HepG2 (cell line): ENCODE measurements at regions of chr6 and their contacts with region 1.

Region 1: DNA sequence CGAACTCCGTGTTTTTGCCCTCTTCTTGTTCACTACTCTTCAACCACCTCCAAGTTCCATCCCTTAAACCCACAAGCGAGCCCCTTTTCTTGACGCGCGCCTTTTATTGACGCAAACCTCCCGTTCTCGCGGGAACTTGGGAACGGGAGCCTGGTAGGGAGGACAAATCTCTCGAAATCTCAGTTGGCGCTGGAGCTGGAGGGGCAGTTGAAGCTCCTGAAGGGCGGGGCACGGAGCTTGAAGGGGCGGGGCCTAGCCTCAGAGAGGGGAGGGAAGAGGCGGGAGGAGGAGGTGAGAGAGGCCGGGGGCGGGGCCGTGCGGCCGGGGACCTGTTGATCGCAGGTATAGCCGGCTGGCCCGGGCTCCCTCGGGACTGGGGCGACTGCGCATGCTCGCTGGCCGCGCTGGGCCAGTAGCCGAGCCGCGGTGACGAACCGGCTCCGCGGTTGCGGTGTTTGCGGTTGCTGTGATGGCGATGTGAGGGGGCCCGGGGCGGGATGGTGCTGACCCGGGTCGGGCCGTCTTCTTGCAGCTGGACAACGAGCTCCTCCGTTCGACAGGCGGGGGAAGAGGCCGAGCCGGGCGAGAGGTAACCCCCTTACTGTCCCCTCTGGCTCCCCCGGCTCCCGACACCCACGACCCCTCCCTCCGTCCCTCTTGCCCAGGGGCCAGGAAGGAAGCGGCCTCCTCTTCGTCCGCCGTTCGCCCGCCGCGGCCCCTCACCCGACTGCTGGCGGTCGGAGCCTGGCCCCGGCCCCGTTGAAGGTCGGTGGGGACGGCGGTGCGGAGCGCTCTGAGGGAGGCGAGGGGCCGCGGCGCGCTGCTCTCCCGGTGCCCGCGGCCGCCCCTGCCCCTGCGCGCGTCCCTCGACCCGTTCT is at the start of gene FAM135A:
- DNase-seq: peak; percentile 97
- ATAC-seq: peak; percentile 95
- H3K4me3 ChIP-seq: peak within 1 kb of the TSS; percentile 90 to 100 (median 94)
- H3K27ac ChIP-seq: peak within 1 kb of the TSS; percentile 72
- H3K4me1 ChIP-seq: peaks cover 40% of the 10 kb centered on the region
- H3K27me3 ChIP-seq: no peaks in the 10 kb centered on the region; a peak in 1 of 5 replicates
- CTCF ChIP-seq: no peak
- EP300 ChIP-seq: peak in 1 of 2 experiments; percentile 19; a peak in 1 of 4 replicates
- POLR2A ChIP-seq: peak; percentile 77 to 98
- RAD21 ChIP-seq: no peak
- total RNA-seq, gene FAM135A: 26.9 and 32.9 TPM in 2 replicates

Region 2: GRCh38 chr6:70353343-70353913 is 59.9 kb before region 1 on chr6:
- CTCF ChIA-PET with region 1: no interaction called
- POLR2A ChIA-PET with region 1: no interaction called
- in situ Hi-C with region 1: no loop called
- intact Hi-C with region 1: no loop called
- DNase-seq: no peak
- ATAC-seq: peak; percentile 62; the same call in 2 of the 3 replicates
- H3K4me3 ChIP-seq: no peak overlapping the region
- H3K27ac ChIP-seq: no peak overlapping the region
- H3K4me1 ChIP-seq: no peaks in the 10 kb centered on the region
- H3K27me3 ChIP-seq: no peaks in the 10 kb centered on the region; a peak in 1 of 5 replicates
- CTCF ChIP-seq: no peak
- EP300 ChIP-seq: no peak
- POLR2A ChIP-seq: no peak
- RAD21 ChIP-seq: no peak

Region 3: GRCh38 chr6:70398783-70399728 is 14.3 kb before region 1 on chr6:
- CTCF ChIA-PET with region 1: no interaction called
- POLR2A ChIA-PET with region 1: interaction called, 75 read pairs
- in situ Hi-C with region 1: no loop called
- intact Hi-C with region 1: loop called (anchors 1 kb)
- DNase-seq: peak; percentile 96
- ATAC-seq: peak; percentile 99
- H3K4me3 ChIP-seq: peak overlapping the region; percentile 24 to 39 (median 34); a peak in 5 of 6 replicates
- H3K27ac ChIP-seq: peak overlapping the region; percentile 67
- H3K4me1 ChIP-seq: peaks cover 53% of the 10 kb centered on the region
- H3K27me3 ChIP-seq: no peaks in the 10 kb centered on the region
- CTCF ChIP-seq: no peak
- EP300 ChIP-seq: peak in 1 of 2 experiments; percentile 59; a peak in 2 of 4 replicates
- POLR2A ChIP-seq: peak; percentile 43 to 77; a peak in 2 of 4 replicates
- RAD21 ChIP-seq: no peak

Region 4: DNA sequence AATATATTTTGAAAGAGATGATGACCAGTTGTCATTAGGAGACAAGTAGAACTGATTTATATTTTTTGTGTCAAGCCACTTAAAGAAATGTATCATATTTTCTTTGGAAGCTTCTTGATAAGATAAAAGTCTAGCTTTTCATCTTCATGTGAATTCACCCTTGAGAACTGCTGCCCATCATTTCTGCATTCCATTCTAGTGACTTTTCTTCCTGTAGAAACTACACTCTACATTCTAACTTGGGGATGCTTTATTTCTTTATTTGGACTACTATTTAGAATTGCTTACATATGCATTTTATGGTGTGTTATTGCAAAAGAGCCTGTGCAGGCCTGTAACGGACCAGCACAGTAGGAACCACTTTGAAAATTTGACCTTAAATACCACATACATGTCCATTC is 1873.6 kb after region 1 on chr6:
- CTCF ChIA-PET with region 1: no interaction called
- POLR2A ChIA-PET with region 1: no interaction called
- in situ Hi-C with region 1: no loop called
- intact Hi-C with region 1: no loop called
- DNase-seq: no peak
- ATAC-seq: no peak
- H3K4me3 ChIP-seq: no peak overlapping the region
- H3K27ac ChIP-seq: no peak overlapping the region
- H3K4me1 ChIP-seq: no peaks in the 10 kb centered on the region
- H3K27me3 ChIP-seq: no peaks in the 10 kb centered on the region
- CTCF ChIP-seq: no peak
- EP300 ChIP-seq: no peak
- POLR2A ChIP-seq: no peak
- RAD21 ChIP-seq: no peak